GM18951 (cell line): ENCODE measurements at regions of chr17 and their contacts with region 1.

Region 1: DNA sequence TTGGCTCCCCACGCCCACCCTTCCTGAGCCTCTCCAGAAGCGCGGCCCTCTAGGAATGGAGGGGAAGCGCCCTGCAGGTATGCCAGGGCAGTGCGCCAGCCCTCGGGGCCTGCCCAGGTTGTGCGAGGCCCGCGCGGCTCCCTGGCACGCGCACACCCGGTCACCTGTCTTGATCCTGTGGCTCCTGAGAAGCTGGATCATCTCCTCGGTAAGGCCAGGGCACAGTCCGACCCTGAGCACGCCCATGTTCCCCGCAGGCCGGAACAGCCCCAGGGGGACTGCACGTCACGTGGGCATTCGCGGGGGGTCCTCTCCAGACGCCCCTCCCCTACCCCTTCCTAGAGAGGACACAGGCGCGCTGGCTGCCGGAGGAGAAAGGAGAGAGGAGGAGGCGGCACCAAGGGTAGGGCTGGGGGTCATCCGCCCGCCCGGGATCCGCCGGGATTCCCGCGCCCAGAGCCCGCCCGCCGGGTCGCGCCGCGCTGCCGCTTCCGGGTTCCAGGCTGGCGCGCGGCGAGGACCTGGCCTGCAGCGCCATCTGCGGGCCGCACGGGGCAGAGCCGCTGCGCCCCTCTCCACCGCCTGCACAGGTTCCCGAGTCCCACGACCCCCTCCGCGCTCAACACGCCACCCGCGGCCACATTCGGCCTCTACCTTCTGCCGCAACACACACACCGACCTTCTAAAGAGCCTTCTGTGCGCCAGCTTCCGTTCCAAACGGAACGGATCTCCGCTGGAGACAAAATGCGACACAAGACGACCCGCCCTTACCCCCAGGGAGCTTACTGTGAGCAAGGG is at the start of gene RAD51D:
- POLR2A ChIP-seq: peak; percentile 56

Region 2: DNA sequence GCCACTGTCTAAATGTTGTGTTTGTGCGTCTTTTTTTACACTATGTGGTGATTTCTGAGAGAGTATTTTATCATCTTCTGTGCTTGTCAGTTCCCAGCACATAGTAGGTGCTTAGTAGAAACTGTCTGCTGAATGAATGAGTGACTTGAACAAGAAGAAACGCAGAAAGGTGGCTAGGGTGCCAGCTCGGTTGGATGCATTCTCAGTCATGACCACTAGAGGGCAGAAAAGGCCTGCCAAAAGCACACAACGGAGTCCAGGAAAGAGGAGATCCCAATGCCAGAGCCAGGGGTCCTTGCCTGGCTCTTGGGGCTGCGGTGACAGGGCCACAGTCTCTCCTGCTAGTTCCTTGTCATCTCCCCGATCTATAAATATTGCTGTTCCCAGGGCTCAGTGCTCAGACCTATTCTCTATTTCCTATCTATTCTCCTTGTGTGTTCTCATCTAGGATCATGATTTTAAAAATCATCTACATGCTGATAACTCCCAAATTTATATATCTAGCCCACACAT is 699.3 kb before region 1 on chr17:
- in situ Hi-C with region 1: loop called (anchors 5 kb)
- POLR2A ChIP-seq: no peak

Region 3: DNA sequence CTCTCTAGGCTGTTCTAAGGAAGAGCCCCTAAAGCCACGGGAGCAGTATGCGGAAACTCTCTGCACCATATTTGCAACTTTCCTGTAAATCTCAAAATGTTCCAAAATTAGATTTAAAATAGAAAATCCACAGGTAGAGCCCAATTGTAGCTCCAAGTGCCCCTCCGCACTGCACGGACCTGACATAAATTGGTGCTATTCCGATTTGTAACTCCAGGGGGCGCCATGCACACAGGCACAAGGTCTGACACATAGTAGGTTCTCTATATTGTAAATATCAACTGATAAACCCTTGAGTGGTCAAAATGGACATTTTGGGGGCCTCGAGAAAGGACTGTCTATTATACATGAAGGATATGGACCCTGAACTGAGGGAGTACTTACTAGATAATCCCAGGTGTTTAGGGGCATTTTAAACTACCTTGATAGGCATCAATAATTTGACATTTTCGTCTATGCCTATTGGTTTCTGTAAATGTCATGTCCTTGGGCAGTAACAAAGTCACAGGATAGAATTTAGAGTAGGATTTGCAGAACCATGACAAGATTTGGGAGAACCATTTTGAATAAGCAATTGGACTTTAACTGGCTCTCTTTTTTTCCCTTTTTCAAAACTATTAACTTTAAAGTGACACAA is 576.7 kb before region 1 on chr17:
- in situ Hi-C with region 1: loop called (anchors 25 kb)
- POLR2A ChIP-seq: no peak

Region 4: DNA sequence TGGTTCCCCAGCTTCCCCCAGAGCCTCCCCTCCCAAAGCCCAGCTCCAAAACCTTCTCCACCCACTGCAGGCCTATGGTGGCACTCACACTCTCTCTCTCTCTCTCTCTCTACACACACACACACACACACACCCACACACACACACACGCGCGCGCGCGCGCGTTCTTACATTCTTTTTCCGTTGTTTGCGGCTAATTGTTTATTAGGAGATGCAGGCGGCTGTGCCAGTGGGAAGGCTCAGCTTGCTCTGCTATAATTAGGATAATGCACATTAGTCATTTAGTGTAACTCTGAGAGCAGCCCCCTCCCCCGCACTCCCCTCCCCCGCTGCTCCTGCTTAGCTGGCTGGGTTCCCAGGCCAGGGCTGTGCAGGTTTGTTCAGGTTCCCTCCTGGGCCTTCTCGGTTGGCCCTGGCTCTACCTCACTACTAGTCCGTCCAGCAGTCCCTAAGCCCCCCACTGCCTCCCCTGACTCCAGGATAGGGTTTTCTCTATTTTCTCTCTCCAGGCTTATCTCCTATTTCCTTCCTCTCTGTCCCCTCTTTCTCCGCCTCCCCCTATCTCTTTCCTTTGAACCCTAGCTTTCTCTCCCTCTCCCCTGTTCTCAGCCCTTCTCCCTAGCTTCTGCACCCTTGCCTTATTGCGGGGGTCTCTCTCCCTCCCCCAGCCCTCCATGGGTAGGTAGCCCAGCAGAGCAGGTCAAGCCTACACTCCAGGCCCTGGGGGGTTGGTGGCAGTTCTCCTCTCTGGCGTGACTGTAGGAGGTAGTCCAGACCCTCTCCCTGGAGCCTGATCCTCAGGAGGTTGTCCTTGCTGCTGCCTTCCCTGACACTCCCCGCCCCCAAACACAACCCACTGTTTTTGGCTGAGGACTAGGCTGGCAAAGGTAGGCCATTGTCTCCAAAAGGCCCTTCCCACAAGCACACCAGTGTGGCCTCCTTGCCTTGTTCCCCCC is 506.2 kb before region 1 on chr17:
- in situ Hi-C with region 1: no loop called
- POLR2A ChIP-seq: no peak